ENCODE measurements at regions of chr9 and their contacts with region 1.

Region 1: DNA sequence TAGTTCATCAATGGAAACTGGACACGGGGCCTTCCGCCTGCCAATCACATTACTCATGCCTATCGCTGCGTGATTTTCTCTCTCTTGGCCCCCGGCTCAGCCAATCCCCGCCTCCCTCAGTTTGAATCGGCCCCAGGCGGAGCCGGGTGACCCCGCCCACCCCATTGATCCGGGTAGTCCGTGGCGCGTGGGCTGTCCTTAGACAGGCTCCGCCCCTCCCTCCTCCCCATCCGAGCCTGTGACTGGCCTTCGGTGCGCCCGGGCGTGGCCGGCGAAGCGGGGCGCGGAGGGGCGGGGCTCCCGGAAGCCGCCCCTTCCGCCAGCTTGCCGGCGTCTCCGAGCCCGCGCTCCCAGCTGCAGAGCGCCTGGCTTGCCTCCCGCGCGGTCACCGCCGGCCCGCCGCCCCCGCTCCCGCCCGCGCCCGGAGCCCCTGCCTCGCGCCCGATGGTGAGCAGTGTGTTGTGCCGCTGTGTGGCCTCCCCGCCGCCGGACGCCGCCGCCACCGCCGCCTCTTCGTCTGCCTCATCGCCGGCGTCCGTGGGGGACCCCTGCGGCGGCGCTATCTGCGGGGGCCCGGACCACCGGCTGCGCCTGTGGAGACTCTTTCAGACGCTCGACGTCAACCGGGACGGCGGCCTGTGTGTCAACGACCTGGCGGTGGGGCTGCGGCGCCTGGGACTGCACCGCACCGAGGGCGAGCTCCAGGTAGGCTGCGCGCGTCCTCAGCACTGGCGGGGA is at the start of gene SLC25A25:
- DNase-seq: peak; percentile 100
- ATAC-seq: peak; percentile 83
- H3K4me3 ChIP-seq: peak within 1 kb of the TSS; percentile 90
- H3K4me3 Mint-ChIP-seq: peak within 1 kb of the TSS; percentile 93
- H3K27ac ChIP-seq: peak within 1 kb of the TSS; percentile 94 to 99
- H3K27ac Mint-ChIP-seq: peak within 1 kb of the TSS; percentile 84
- H3K4me1 ChIP-seq: peaks cover 83% of the 10 kb centered on the region
- H3K4me1 Mint-ChIP-seq: peaks cover 43% of the 10 kb centered on the region
- H3K27me3 ChIP-seq: no peaks in the 10 kb centered on the region
- H3K27me3 Mint-ChIP-seq: no peaks in the 10 kb centered on the region
- CTCF ChIP-seq: no peak
- total RNA-seq, gene SLC25A25: 16.9 to 17.7 TPM

Region 2: GRCh38 chr9:127943731-127944144 is 124.3 kb before region 1 on chr9:
- CTCF ChIA-PET with region 1: interaction called, 6 read pairs
- POLR2A ChIA-PET with region 1: interaction called, 11 read pairs
- intact Hi-C with region 1: no loop called
- DNase-seq: peak; percentile 59 to 89 (median 72)
- ATAC-seq: peak; percentile 74
- H3K4me3 ChIP-seq: no peak overlapping the region
- H3K4me3 Mint-ChIP-seq: peak overlapping the region; percentile 12
- H3K27ac ChIP-seq: peak overlapping the region in 1 of 2 donors; percentile 14
- H3K27ac Mint-ChIP-seq: peak overlapping the region; percentile 88
- H3K4me1 ChIP-seq: peaks cover 58% of the 10 kb centered on the region
- H3K4me1 Mint-ChIP-seq: peaks cover 58% of the 10 kb centered on the region
- H3K27me3 ChIP-seq: no peaks in the 10 kb centered on the region
- H3K27me3 Mint-ChIP-seq: no peaks in the 10 kb centered on the region
- CTCF ChIP-seq: peak; percentile 77

Region 3: GRCh38 chr9:127980706-127981558 is 87.1 kb before region 1 on chr9 and contains the start of gene EEIG1:
- CTCF ChIA-PET with region 1: no interaction called
- POLR2A ChIA-PET with region 1: interaction called, 11 read pairs
- intact Hi-C with region 1: no loop called
- DNase-seq: peak; percentile 95 to 99 (median 97)
- ATAC-seq: peak; percentile 88
- H3K4me3 ChIP-seq: peak within 1 kb of the TSS; percentile 67
- H3K4me3 Mint-ChIP-seq: peak within 1 kb of the TSS; percentile 96
- H3K27ac ChIP-seq: peak within 1 kb of the TSS; percentile 53 to 57
- H3K27ac Mint-ChIP-seq: peak within 1 kb of the TSS; percentile 99
- H3K4me1 ChIP-seq: peaks cover 58% of the 10 kb centered on the region
- H3K4me1 Mint-ChIP-seq: peaks cover 47% of the 10 kb centered on the region
- H3K27me3 ChIP-seq: no peaks in the 10 kb centered on the region
- H3K27me3 Mint-ChIP-seq: no peaks in the 10 kb centered on the region
- CTCF ChIP-seq: no peak
- total RNA-seq, gene EEIG1: 440 to 463 TPM

Region 4: DNA sequence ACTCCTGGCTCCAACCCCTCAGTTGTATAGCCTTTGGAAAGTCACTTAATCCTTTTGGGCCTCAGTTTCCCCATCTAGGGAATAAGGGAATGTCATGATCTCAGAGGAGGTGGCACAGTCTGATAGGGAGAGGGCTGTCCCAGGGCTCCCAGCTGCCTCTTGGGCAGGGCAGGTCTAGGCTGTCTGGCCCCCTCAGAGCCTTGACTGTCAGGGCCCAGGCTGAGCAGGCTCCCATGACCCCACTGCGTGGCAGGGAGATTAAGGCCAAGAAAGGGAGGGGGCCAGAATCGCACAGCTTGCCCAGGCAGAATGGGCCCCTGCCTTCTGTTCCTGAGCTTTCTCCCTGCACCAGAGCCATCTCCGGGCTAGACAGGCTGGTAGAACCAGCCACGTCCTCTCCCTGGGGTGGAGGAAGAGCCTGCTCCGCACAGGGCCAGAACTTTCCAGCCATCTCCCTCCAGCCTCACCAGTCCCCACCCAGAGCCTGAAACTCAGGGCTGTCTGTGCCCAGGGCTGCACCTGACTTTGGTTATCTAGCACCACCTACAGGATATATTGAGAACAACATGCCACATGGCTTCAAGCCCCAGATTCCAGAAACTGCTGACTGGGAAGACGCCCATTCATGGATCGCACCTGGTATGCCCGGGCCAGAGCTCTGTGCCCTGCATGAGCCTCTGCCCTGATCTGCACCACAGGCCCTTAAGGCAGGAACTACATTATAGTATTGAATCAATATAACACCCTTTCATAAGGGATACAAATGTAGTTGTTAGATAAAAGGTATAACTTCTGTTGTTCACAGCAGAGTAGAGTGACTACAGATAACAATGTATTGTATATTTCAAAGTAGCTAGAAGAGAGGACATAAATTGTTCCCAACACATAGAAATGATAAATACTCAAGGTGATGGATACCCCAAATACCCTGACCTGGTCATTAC is 33.0 kb before region 1 on chr9:
- CTCF ChIA-PET with region 1: interaction called, 6 read pairs
- POLR2A ChIA-PET with region 1: interaction called, 20 read pairs
- intact Hi-C with region 1: no loop called
- DNase-seq: peak; percentile 45 to 90 (median 58)
- ATAC-seq: peak; percentile 42
- H3K4me3 ChIP-seq: no peak overlapping the region
- H3K4me3 Mint-ChIP-seq: peak overlapping the region; percentile 70
- H3K27ac ChIP-seq: peak overlapping the region in 1 of 2 donors; percentile 61
- H3K27ac Mint-ChIP-seq: peak overlapping the region; percentile 78
- H3K4me1 ChIP-seq: peaks cover 54% of the 10 kb centered on the region
- H3K4me1 Mint-ChIP-seq: peaks cover 42% of the 10 kb centered on the region
- H3K27me3 ChIP-seq: no peaks in the 10 kb centered on the region
- H3K27me3 Mint-ChIP-seq: no peaks in the 10 kb centered on the region
- CTCF ChIP-seq: peak; percentile 90

Region 5: GRCh38 chr9:128094166-128094967 is 26.3 kb after region 1 on chr9:
- CTCF ChIA-PET with region 1: no interaction called
- POLR2A ChIA-PET with region 1: interaction called, 39 read pairs
- intact Hi-C with region 1: no loop called
- DNase-seq: peak; percentile 33 to 87 (median 62)
- ATAC-seq: peak; percentile 78
- H3K4me3 ChIP-seq: no peak overlapping the region
- H3K4me3 Mint-ChIP-seq: peak overlapping the region; percentile 78
- H3K27ac ChIP-seq: peak overlapping the region; percentile 62 to 81
- H3K27ac Mint-ChIP-seq: peak overlapping the region; percentile 90
- H3K4me1 ChIP-seq: peaks cover 82% of the 10 kb centered on the region
- H3K4me1 Mint-ChIP-seq: peaks cover 79% of the 10 kb centered on the region
- H3K27me3 ChIP-seq: no peaks in the 10 kb centered on the region
- H3K27me3 Mint-ChIP-seq: no peaks in the 10 kb centered on the region
- CTCF ChIP-seq: no peak

Region 6: GRCh38 chr9:128231638-128232527 is 163.8 kb after region 1 on chr9:
- CTCF ChIA-PET with region 1: no interaction called
- POLR2A ChIA-PET with region 1: no interaction called
- intact Hi-C with region 1: no loop called
- DNase-seq: no peak
- ATAC-seq: no peak
- H3K4me3 ChIP-seq: no peak overlapping the region
- H3K4me3 Mint-ChIP-seq: no peak overlapping the region
- H3K27ac ChIP-seq: no peak overlapping the region
- H3K27ac Mint-ChIP-seq: no peak overlapping the region
- H3K4me1 ChIP-seq: no peaks in the 10 kb centered on the region
- H3K4me1 Mint-ChIP-seq: no peaks in the 10 kb centered on the region
- H3K27me3 ChIP-seq: no peaks in the 10 kb centered on the region
- H3K27me3 Mint-ChIP-seq: no peaks in the 10 kb centered on the region
- CTCF ChIP-seq: no peak

Measured in CD4-positive, alpha-beta T cell (primary cell).